PC-9 (cell line): ENCODE measurements at regions of chr13 and their contacts with region 1.

Region 1: GRCh38 chr13:108895220-108895704 is 265.9 kb downstream of the MYO16 start:
- DNase-seq: peak in 1 of 2 experiments; percentile 78
- H3K4me3 ChIP-seq: no peak overlapping the region
- H3K27ac ChIP-seq: no peak overlapping the region
- H3K4me1 ChIP-seq: peaks cover 7% of the 10 kb centered on the region
- H3K27me3 ChIP-seq: no peaks in the 10 kb centered on the region
- CTCF ChIP-seq: peak; percentile 78

Region 2: DNA sequence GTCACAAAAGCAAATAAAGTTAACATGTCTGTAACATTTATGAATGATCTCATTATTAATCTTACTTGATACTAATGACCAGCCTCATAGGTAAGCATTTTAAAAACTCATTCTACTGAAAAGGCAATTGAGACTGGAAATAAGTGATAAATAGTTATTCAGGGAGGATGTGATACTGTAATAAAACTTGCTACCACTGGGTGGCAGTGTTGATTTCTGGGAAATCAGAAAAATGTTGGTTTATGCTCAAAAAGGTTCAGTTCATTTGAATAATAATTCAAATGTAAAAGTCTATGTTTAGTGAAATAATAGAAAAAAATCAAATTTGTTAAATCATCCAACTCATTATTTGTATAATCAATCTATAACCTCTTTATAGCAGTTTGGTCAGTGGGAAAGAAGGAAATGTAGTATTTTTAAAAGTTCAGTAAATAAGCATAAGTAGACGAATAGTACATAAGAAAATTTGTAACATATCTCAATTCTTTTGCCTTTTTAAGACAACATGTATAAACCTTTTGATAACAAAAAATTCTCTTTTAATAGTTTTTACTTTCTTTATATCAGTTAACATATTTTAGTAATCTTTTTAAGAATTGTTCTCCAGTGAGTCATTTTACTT is 667.5 kb before region 1 on chr13:
- CTCF ChIA-PET with region 1: no interaction called
- POLR2A ChIA-PET with region 1: no interaction called
- intact Hi-C with region 1: loop called (anchors 2 kb)
- DNase-seq: no peak
- H3K4me3 ChIP-seq: no peak overlapping the region
- H3K27ac ChIP-seq: no peak overlapping the region
- H3K4me1 ChIP-seq: peaks cover 5% of the 10 kb centered on the region; the same call in 1 of the 2 replicates
- H3K27me3 ChIP-seq: no peaks in the 10 kb centered on the region
- CTCF ChIP-seq: peak; percentile 94

Region 3: DNA sequence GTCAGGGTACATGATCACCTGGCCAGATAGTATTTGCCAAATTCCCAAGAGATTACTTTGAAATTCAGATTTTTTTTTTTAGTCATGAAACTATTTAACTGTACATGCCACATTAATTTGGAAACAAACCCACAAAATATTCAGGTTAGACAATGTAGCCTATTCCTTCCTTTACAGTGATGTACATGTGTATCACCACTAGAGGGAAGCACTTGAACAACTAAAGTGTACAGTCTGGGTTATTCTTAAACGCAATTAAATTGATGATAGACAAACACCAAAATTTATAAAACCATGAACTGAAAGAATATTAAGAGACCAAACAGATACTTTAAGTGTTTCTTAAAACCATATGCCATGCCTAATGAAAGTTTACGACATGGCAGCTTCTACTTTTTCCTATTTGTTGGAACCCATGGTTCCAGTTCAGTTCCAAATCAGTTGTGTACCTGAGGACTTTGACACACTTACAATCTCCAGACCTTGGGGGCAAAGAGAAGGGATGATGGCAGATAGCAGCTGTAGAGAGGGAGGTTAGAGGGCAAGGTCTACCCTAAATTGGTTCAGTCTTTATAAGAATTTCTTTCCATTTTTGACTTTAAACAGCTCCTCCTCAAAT is 572.9 kb before region 1 on chr13:
- CTCF ChIA-PET with region 1: no interaction called
- POLR2A ChIA-PET with region 1: no interaction called
- intact Hi-C with region 1: loop called (anchors 2 kb)
- DNase-seq: no peak
- H3K4me3 ChIP-seq: no peak overlapping the region
- H3K27ac ChIP-seq: no peak overlapping the region
- H3K4me1 ChIP-seq: no peaks in the 10 kb centered on the region
- H3K27me3 ChIP-seq: peaks cover 61% of the 10 kb centered on the region
- CTCF ChIP-seq: peak; percentile 94

Region 4: GRCh38 chr13:108609353-108609752 is 285.9 kb before region 1 on chr13:
- CTCF ChIA-PET with region 1: interaction called, 7 read pairs
- POLR2A ChIA-PET with region 1: no interaction called
- intact Hi-C with region 1: loop called (anchors 5 kb)
- DNase-seq: no peak
- H3K4me3 ChIP-seq: no peak overlapping the region
- H3K27ac ChIP-seq: no peak overlapping the region
- H3K4me1 ChIP-seq: no peaks in the 10 kb centered on the region
- H3K27me3 ChIP-seq: no peaks in the 10 kb centered on the region
- CTCF ChIP-seq: peak; percentile 72

Region 5: DNA sequence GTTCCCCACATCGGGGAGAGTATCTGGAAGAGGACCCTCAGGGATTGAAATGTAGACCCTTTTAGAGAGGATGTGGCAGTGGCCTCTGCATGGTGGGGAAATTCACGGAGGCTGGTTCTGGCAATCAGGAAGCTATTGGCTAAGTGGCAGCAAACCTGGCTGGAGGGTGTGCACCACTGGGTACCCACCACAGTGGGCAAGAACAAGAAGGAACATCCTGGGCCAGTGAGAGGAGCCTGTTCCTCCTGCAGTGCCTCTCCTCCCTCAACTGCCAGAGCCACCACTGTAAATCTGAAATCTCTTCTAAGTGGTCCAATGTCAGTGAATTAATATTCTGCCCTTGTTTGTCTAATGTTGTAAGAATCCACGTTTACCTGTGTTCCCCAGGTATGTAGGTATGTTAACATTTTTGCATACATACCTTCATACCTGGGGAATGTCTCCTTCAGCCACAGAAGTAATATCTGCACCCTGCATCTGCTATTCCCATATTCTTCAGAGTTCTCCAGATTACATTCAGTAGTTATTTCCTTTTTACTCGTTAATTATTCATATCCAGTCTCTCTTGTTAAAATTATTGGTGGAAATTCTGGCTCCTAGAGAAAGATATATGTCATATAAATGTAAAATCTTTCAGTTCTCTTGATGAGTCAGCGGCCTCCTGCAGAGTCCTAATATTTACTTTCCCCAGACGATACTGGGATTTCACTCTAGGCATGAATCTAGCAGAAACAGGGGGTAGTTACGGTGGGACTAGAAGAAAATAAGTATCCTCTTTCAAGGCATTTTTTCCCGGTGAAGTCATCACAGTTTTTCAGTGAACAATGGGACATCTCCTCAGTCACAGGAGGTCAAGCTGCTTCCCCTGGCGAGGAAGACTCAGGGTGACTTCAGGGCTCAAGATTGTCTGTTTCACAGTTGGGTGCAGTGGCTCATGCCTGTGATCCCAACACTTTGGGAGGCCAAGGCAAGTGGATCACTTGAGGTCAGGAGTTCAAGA is 117.5 kb before region 1 on chr13:
- CTCF ChIA-PET with region 1: no interaction called
- POLR2A ChIA-PET with region 1: no interaction called
- intact Hi-C with region 1: no loop called
- DNase-seq: peak in 1 of 2 experiments; percentile 75
- H3K4me3 ChIP-seq: no peak overlapping the region
- H3K27ac ChIP-seq: peak overlapping the region; percentile 51
- H3K4me1 ChIP-seq: peaks cover 32% of the 10 kb centered on the region
- H3K27me3 ChIP-seq: no peaks in the 10 kb centered on the region
- CTCF ChIP-seq: no peak

Region 6: DNA sequence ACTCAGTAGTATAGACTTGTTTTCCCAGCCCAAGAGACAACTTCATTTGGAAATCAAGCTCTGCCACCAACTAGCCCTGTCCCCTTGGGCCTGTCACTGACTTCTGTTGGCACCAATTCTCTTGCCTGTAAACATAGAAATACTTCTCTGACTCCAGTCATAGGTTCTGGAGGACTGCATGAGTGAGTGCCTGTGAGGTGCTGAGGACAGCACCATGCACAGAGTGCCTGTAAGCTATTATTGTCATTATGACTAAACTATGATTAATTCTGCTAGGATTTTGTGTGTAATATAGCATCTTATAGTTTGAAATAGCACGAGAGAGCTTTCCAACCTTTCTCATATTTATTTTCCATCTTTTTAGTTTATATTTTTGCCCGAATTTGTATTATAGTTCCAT is 18.0 kb before region 1 on chr13:
- CTCF ChIA-PET with region 1: interaction called, 11 read pairs
- POLR2A ChIA-PET with region 1: no interaction called
- intact Hi-C with region 1: no loop called
- DNase-seq: no peak
- H3K4me3 ChIP-seq: no peak overlapping the region
- H3K27ac ChIP-seq: no peak overlapping the region
- H3K4me1 ChIP-seq: no peaks in the 10 kb centered on the region
- H3K27me3 ChIP-seq: no peaks in the 10 kb centered on the region
- CTCF ChIP-seq: no peak

Region 7: DNA sequence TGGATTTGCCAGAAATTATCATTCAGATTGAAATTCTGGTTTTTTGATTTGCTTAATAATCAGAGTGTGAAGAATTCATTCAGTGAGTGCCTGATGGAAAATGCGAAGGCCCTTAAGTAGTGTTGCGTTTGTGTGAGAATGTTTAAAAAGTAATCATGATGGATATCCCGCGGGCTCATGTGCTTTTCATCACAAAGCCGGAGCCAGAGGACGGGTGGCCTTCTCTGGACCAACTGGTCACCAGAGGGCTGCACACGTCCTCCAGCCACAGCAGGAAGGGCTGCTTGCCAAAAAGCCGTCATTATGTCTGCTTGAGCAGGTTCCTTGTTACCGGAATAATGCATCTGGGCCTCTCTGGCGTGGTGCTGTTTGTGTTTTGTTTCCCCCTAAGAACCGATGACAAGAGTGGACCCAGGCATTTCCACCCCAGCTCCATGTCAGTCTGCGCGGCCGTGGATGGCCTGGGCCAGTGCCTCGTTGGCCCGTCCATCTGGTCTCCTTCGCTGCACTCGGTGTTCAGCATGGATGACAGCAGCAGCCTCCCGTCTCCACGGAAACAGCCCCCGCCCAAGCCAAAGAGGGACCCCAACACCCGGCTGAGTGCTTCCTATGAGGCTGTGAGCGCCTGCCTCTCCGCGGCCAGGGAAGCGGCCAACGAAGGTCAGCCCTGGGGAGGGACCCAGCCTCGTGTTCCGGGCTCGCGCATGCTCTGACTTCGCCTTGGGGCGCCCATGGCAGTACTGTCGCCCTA is 231.8 kb after region 1 on chr13:
- CTCF ChIA-PET with region 1: no interaction called
- POLR2A ChIA-PET with region 1: no interaction called
- intact Hi-C with region 1: no loop called
- DNase-seq: no peak
- H3K4me3 ChIP-seq: no peak overlapping the region
- H3K27ac ChIP-seq: no peak overlapping the region
- H3K4me1 ChIP-seq: no peaks in the 10 kb centered on the region
- H3K27me3 ChIP-seq: no peaks in the 10 kb centered on the region
- CTCF ChIP-seq: no peak

Region 8: GRCh38 chr13:109606520-109606919 is 711.3 kb after region 1 on chr13:
- CTCF ChIA-PET with region 1: interaction called, 10 read pairs
- POLR2A ChIA-PET with region 1: no interaction called
- intact Hi-C with region 1: no loop called
- DNase-seq: no peak
- H3K4me3 ChIP-seq: no peak overlapping the region
- H3K27ac ChIP-seq: no peak overlapping the region
- H3K4me1 ChIP-seq: no peaks in the 10 kb centered on the region
- H3K27me3 ChIP-seq: no peaks in the 10 kb centered on the region
- CTCF ChIP-seq: no peak